ENCODE measurements at regions of chr20 and their contacts with region 1.

Region 1: GRCh38 chr20:32902456-32903420 is 44.0 kb downstream of the EFCAB8 start:
- DNase-seq: peak; percentile 63 to 85 (median 76)
- H3K4me3 ChIP-seq: no peak overlapping the region
- H3K27ac ChIP-seq: no peak overlapping the region
- H3K27me3 ChIP-seq: no peaks in the 10 kb centered on the region
- CTCF ChIP-seq: peak; percentile 77 to 99 (median 98)

Region 2: DNA sequence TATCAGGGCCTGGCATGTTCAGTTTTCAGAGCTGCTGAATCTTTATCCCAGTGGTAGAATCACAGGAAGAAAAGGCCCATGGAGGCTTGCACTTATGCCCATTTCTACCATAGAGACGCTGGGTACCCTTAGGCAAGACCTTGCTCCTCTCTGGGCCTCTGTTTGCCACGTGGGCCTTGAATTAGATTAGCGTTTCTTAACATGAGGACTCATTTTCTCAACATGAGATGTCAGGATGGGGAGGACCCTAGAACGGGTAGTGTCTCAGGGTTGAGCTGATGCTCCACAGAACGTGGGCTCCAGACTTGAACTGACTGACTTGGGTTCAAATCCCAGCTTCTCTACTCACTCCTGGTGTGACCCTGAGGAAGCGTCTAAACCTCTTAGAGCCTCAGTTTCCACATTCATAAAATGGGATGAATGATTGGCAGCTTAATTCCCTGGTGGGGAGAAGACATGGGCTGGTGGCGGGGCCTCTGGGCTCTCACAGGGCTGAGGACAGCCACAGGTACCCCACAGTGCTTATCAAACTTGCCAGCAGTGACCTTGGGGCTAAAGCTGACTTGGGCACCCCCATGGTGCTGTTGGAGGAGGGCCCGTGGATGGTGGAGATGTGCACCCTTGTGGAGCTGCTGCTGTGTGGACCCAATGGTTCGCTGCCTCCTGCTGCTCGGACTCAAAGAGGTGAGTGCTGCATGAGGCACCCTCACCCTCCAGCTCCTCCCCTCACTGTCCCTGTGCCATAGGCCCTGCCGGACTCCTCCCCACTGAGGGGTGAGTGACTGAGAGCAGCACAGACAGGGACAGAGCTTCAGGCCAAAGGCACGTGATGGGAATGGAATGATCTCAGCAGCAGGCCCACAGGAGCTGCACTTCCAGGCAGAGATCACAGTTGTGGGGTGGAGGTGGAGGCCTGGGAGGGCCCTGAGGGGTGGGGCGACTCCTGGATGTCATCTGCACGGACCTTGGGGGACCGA is 73.2 kb after region 1 on chr20:
- intact Hi-C with region 1: loop called in 1 of 2 experiments (anchors 2 kb)
- DNase-seq: peak in 3 of 10 donors; percentile 9 to 32 (median 18)
- H3K4me3 ChIP-seq: no peak overlapping the region
- H3K27ac ChIP-seq: peak overlapping the region in 16 of 59 donors; percentile 5 to 91 (median 26)
- H3K27me3 ChIP-seq: no peaks in the 10 kb centered on the region
- CTCF ChIP-seq: no peak

Region 3: GRCh38 chr20:33005132-33005566 is 102.4 kb after region 1 on chr20:
- intact Hi-C with region 1: loop called in 1 of 2 experiments (anchors 10 kb)
- DNase-seq: no peak
- H3K4me3 ChIP-seq: no peak overlapping the region
- H3K27ac ChIP-seq: no peak overlapping the region
- H3K27me3 ChIP-seq: no peaks in the 10 kb centered on the region
- CTCF ChIP-seq: peak in 36 of 56 donors; percentile 7 to 44 (median 26)

Region 4: GRCh38 chr20:33076662-33077372 is 174.1 kb after region 1 on chr20:
- intact Hi-C with region 1: loop called (anchors 5 kb)
- DNase-seq: no peak
- H3K4me3 ChIP-seq: no peak overlapping the region
- H3K27ac ChIP-seq: no peak overlapping the region
- H3K27me3 ChIP-seq: peaks cover 0 to 6% (median 0%) of the 10 kb centered on the region in 45 donors
- CTCF ChIP-seq: peak in 43 of 56 donors; percentile 11 to 71 (median 42)

Region 5: DNA sequence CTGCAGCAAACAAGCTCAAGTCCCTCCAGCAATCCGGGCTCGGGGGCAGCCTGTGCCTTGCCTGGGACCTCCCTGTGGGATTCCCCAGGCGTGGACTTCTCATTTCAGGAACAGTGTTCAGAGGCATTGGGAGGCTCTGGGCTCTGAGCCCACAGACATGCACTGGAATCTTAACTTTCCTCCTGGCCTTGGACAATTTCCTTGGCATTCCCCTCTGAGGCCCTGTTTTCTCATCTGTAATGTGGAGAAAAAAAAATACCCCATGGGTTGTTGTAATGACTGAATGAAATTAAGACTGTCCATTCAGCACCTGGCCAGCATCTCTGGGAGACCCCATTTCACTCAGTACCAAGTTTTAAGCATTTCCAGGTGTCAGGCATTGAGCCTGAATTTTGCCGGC is 194.3 kb after region 1 on chr20:
- intact Hi-C with region 1: loop called (anchors 1 to 5 kb)
- DNase-seq: no peak
- H3K4me3 ChIP-seq: no peak overlapping the region
- H3K27ac ChIP-seq: no peak overlapping the region
- H3K27me3 ChIP-seq: no peaks in the 10 kb centered on the region
- CTCF ChIP-seq: no peak

Region 6: DNA sequence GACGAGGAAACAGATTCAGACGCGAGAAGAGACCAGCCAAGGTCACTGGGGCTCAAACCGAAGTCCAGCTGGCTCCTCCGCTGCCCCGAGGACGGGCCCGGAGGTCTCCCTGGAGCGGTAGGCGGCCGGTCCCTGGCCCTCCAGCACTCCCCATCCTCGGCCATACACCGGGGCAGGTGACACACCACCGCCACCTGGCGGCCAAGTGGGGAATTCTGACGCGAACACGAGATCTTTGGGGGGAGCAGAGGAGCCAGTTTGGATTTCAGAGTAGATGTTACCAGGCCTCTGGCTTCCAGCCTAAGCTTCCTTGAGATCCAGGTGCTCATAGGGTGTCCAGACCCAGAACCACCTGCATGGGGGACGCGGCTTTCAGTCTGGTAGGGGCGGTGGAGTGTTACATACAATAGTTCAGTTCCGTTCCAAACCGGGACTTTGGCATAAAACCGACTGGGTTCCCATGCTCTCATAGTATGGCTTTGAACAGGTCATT is 396.4 kb after region 1 on chr20:
- intact Hi-C with region 1: loop called (anchors 2 to 5 kb)
- DNase-seq: peak; percentile 56 to 84 (median 72)
- H3K4me3 ChIP-seq: peak overlapping the region in 12 of 59 donors; percentile 10 to 45 (median 22)
- H3K27ac ChIP-seq: no peak overlapping the region
- H3K27me3 ChIP-seq: no peaks in the 10 kb centered on the region
- CTCF ChIP-seq: peak; percentile 78 to 99 (median 94)

Measured in dorsolateral prefrontal cortex (tissue), 120 donors.